Posterior cingulate gyrus (tissue), 11 donors: ENCODE measurements at regions of chr3 and their contacts with region 1.

Region 1: DNA sequence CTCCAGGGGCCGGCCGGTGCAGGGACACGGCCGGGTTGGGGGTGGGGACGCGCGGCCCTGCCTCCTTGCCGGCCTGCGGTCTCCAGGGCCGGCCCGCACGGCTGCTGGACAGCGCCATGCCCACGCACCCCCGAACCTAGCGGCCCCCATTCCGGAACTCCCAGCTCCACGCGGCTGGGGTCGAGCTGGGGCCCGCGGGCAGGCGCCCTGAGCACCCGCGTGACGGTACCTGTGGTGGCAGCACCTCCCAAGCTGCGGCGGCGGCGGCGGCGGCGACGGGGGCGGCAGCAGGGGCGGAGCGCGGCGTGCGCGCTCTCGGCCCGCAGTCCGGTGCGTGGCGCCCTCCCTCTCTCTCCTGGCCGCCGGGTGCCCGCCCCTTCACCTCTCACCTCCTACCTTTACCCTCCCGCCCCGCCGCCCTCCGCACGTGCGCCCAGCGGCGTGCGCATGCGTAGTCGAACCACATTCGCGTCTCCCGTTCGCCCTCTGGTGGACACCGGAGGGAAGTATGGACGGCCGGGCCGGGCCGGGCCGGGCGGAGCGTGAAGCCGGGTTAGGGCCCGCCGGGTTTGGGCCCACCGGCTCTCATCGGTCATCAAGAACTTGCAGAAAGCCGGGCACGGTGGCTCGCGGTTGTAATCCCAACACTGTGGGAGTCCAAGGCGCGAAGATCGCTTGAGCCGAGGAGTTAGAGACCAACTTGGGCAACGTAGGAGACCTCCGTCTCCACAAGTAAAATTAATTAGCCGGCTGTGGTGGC is at the start of gene SCAP:
- DNase-seq: peak; percentile 83 to 99 (median 89)

Region 2: DNA sequence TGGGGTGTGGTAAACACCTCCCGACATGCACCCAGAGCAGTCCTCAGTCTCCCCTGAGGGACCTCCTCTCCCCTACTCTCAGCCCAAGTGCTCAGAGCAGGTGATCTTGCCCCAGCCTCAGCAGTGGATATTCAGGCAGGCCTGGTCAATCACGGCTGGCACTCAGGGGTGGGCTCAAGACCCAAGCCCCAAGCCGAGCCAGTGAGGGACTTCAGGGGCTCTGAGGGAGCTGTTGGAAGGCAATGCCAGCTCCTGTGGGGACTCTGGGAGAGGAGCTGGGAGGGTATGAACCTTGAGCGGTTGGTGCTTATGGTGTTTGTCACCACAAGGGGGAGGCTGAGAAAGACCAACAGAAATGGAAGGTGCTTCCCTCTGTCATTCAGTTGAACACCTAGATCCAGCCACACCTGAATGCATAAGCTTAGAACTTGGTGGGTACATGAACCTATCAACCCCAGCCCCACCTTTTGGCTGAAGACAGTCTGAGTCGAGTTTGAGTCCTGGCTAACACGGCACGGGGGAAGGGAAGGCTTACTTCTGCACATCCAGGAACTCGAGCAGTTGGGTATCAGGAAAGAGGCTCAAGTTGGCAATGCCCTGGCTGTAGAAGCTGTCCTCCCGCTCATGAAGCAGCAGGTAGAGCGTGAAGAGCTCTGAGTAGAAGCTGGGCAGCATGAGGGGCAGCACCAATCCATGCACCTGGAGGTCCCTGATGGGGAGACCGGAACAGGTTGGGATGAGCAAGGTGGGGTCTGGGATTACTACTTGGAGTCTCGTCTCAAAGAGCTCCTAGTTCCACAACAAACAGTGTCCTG is 801.5 kb before region 1 on chr3:
- intact Hi-C with region 1: no loop called
- DNase-seq: peak in 4 of 10 donors; percentile 1 to 46 (median 18)

Region 3: GRCh38 chr3:46759239-46760167 is 716.2 kb before region 1 on chr3:
- intact Hi-C with region 1: no loop called
- DNase-seq: no peak

Region 4: GRCh38 chr3:47380601-47381316 is 95.0 kb before region 1 on chr3 and contains the start of gene PTPN23:
- intact Hi-C with region 1: loop called (anchors 2 kb)
- DNase-seq: peak; percentile 97 to 100 (median 98)

Region 5: GRCh38 chr3:47420511-47421484 is 55.0 kb before region 1 on chr3:
- intact Hi-C with region 1: loop called (anchors 1 kb)
- DNase-seq: peak; percentile 73 to 97 (median 90)

Region 6: GRCh38 chr3:47440131-47440530 is 35.6 kb before region 1 on chr3:
- intact Hi-C with region 1: loop called (anchors 2 kb)
- DNase-seq: peak in 5 of 10 donors; percentile 21 to 89 (median 45)

Region 7: DNA sequence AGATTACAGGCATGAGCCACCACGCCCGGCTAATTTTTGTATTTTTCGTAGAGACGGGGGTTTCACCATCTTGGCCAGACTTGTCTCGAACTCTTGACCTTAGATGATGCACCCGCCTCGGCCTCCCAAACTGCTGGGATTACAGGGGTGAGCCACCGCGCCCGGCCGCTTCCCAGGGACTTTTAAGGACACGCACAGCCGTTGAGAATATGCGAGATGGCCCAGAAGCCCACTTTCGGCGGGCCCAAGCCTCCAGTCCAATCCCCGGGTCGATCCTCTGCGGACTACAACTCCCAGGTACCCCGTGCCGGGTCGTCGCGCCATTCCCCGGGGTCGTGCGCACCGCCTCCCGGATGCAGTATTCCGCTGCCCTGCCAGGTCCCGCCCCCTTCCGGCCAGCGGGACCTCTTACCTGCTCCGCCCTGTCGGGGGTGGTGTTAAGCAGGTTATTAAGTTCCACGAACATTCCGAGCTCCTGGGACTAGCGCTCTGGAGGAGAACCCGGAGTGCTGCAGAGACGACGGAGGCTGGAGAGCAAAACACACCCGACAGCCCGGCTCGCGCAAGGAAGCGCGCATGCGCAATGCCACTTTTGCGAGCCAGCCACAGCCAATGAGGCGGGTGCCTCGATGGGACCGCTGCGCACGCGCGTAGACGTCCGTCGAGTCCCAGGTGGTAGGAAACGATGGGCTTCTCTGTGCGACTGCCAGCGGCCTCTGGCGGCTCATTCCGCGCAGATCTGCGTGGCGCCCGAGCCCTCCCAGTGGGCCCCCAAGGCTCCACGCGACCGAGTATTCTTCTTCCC is 37.6 kb after region 1 on chr3 and contains the start of gene ELP6:
- intact Hi-C with region 1: loop called (anchors 2 kb)
- DNase-seq: peak; percentile 94 to 99 (median 96)

Region 8: GRCh38 chr3:47781685-47782445 is 306.1 kb after region 1 on chr3 and contains the start of gene SMARCC1:
- intact Hi-C with region 1: no loop called
- DNase-seq: peak; percentile 94 to 99 (median 97)